Aorta (tissue), 5 donors: ENCODE measurements at regions of chr10 and their contacts with region 1.

Region 1: DNA sequence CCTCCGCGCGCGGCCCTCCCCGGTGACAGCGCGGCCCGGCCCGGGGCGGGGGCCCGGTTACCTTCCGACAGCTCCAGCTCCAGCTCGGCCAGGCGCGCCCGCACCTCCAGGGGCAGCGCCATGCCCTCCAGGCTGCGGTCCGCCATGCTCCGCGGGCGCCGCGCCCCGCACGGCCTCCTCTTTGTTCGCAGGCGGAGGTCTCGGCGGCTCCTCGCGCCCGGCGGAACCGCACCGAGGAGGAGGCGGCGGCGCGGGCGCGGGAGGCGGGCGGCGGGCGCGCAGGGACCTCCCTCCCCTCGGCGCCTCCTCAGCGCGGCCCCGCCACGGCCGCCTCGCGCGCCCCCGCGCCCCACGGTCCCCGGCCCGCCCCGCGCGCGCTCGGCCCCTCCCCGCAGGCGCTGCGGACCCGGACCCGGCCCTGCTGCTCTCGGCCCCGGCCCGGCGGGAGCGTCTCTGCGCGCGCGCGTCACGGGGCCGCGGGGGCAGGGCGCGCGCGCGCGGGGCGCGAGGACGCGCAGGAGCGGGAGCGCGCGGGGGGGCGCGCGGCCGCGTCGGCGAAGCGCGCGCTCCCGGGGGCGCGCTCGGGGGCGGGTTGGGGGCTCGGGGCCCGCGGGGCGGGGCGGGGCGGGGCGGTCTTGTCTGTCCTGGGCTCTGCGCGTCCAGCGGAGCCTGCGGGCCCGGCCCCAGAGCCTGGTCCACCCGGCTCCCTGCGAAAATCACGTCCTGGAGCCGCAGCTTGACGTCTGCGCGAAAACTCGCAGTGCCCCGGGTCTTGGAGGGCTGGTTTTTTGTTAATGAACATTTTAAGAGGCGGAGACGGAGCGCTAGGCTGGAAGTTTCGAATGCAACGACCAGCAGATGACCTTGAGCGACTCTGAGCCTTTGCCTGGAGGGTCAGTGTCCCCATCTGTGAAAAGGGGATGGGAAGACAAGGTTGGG is at the start of gene DIP2C:
- DNase-seq: peak; percentile 83 to 92
- ATAC-seq: peak; percentile 81
- H3K4me3 ChIP-seq: peak within 1 kb of the TSS; percentile 75 to 81
- H3K27ac ChIP-seq: peak within 1 kb of the TSS; percentile 20 to 95
- H3K4me1 ChIP-seq: no peaks in the 10 kb centered on the region
- H3K27me3 ChIP-seq: no peaks in the 10 kb centered on the region
- total RNA-seq, gene DIP2C: 38.7 to 40.2 TPM

Region 2: DNA sequence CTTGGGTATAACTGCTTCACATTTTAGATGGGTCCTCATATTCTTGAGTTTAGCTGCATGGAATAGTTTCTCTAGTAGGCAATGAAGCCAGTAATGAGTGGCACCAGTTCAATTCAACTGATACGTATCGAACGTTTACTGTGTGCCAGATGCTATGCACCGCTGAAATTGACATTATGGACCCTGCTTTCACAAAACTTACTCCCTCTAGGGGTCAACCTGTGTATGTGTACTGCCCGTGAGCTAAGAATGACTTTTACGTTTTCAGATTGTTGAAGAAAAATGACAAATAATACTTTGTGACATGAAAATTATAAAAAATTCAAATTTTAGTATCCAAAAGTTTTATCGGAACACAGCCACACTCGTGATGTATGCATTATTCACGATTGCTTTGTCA is 459.0 kb before region 1 on chr10:
- intact Hi-C with region 1: no loop called
- DNase-seq: no peak
- ATAC-seq: no peak
- H3K4me3 ChIP-seq: no peak overlapping the region
- H3K27ac ChIP-seq: no peak overlapping the region
- H3K4me1 ChIP-seq: peaks cover 0 to 5% of the 10 kb centered on the region in 2 donors
- H3K27me3 ChIP-seq: no peaks in the 10 kb centered on the region

Region 3: DNA sequence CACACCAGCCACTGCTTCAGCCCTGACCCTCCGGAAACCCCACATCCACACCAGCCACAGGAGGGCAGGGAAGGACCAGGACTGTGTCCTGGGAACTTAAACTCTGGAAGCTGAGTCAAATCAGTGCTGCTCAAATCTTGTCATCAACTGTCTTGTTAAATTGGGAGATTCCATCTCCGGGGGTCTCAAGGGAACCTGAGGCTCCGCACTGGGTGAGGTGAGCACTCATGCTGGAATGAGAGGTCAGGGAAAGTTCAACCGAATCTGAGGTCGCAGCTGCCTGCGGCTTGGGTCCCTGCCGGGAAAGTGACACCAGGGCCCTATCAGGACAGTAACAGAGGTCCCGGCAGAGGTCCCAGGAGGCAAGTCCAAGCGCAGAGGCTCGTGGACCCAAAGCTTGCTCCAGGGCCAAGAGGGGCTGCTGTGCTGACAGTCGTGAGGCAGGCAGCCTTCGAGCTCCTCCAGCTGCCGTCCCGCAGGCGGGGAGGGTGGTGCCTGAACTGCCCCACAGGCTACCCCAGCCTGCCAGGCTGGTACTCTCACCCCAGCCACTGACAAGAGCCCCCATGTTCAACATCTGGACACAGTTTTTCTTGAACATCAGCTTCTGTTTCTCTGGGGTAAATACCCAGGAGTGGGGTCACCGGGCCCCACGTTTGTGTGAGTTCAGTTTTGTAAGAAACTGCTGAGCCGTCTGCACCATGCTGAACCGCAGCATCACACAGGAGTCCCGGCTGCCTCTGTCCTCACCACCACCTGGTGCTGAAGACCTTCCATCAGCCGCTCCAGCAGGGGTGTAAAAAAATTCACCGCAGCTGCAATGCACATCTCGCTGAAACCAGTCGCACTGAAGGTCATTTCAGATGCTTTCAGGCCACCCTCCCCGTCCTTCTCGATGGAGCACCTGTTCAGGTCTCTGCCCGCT is 101.2 kb before region 1 on chr10:
- intact Hi-C with region 1: loop called in 1 of 2 experiments (anchors 10 kb)
- DNase-seq: peak in 1 of 2 donors; percentile 78
- ATAC-seq: peak; percentile 62
- H3K4me3 ChIP-seq: no peak overlapping the region
- H3K27ac ChIP-seq: no peak overlapping the region
- H3K4me1 ChIP-seq: no peaks in the 10 kb centered on the region
- H3K27me3 ChIP-seq: no peaks in the 10 kb centered on the region

Region 4: DNA sequence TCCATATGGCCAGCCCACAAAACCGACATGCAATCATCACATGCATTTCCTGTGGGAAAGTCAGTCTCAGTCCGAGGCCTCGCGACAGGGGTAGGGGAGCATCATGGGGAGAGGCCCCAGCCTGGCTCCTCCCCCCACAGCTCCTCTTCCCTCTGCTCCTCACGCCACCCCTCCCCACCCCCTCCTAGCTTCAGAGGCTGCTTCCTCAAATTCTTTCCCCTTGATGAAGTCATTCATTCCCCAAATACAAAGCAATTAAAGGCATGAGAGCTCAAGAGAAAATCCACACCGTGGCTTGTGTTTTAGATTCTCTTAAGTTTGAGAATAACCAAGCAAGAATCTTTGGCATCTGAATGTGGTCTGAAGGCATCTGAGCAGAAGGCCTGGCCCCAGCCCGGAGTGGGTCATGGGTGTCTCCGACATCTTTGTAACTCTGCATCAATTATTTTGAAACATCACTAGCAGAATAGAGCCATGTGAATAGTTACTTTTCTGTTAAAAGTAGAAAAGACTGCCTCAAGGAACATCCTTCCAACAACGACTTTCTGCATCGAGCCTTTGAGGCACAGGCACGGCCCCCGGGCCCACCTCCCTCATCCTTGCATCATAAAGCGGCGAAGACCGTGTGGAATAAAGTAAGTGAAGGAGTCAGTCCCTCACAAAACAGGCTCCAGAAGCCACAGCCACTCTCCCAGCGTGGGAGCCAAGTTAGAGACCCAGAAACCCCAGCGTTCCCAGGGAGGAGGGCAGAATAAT is 91.1 kb before region 1 on chr10:
- intact Hi-C with region 1: loop called in 1 of 2 experiments (anchors 5 kb)
- DNase-seq: peak; percentile 11 to 79
- ATAC-seq: no peak
- H3K4me3 ChIP-seq: no peak overlapping the region
- H3K27ac ChIP-seq: peak overlapping the region; percentile 62 to 75
- H3K4me1 ChIP-seq: no peaks in the 10 kb centered on the region
- H3K27me3 ChIP-seq: no peaks in the 10 kb centered on the region

Region 5: DNA sequence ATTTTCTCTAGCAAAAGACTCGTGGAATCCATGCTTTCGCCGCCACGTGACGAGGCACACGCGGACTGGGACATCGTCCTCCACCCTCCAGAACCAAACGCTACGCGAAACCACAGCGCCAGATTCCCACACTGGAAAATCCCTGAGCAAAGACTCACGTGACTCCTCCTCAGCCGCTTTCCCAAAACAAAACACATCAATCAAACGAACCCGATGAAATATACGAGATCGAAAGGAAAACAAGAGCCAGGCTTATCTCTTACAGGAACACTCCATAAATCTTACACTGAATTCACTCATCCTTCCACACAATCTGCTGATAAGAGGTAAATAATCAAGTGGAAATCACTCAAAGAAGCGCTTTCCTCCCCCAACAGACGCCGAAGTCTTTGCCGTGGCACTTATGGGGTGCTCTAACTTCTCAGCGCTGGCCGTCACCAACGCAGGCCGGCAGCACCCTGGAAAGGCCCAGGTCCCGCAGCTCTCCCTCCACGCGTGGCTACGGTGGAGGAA is 24.1 kb before region 1 on chr10:
- intact Hi-C with region 1: no loop called
- DNase-seq: peak; percentile 73 to 88
- ATAC-seq: peak; percentile 81
- H3K4me3 ChIP-seq: peak overlapping the region in 1 of 2 donors; percentile 17
- H3K27ac ChIP-seq: peak overlapping the region in 1 of 2 donors; percentile 11
- H3K4me1 ChIP-seq: peaks cover 4% of the 10 kb centered on the region in 2 donors
- H3K27me3 ChIP-seq: no peaks in the 10 kb centered on the region